ENCODE measurements at regions of chr1 and their contacts with region 1.

Region 1: GRCh38 chr1:48572646-48573261 is 100.8 kb upstream of the SPATA6 start:
- DNase-seq: no peak
- H3K4me3 ChIP-seq: no peak overlapping the region
- H3K27me3 ChIP-seq: no peaks in the 10 kb centered on the region
- CTCF ChIP-seq: peak; percentile 59

Region 2: DNA sequence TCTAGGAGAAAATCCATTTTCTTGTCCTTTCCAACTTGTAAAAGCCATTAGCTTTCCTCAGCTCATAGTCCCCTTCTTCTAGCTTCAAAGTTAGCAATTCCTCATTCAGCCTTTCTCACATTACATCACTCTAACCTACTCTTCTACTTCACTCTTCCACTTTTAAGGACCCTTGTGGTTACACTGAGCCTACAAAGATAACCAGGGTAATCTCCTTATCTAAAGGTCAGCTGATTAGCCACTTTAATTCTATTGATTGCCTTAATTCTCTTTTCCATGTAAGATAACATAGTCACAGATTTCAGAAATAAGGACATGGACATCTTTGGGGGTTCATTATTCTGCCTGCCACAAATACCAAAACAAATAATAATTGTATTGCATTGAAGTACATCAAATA is 92.2 kb before region 1 on chr1:
- CTCF ChIA-PET with region 1: no interaction called
- POLR2A ChIA-PET with region 1: no interaction called
- DNase-seq: no peak
- H3K4me3 ChIP-seq: no peak overlapping the region
- H3K27me3 ChIP-seq: no peaks in the 10 kb centered on the region
- CTCF ChIP-seq: no peak

Region 3: GRCh38 chr1:48697066-48697707 is 124.4 kb after region 1 on chr1:
- CTCF ChIA-PET with region 1: interaction called, 21 read pairs
- POLR2A ChIA-PET with region 1: no interaction called
- DNase-seq: no peak
- H3K4me3 ChIP-seq: no peak overlapping the region
- H3K27me3 ChIP-seq: no peaks in the 10 kb centered on the region
- CTCF ChIP-seq: peak; percentile 89

Region 4: GRCh38 chr1:48817505-48818114 is 244.9 kb after region 1 on chr1:
- CTCF ChIA-PET with region 1: interaction called, 14 read pairs
- POLR2A ChIA-PET with region 1: no interaction called
- DNase-seq: no peak
- H3K4me3 ChIP-seq: no peak overlapping the region
- H3K27me3 ChIP-seq: no peaks in the 10 kb centered on the region
- CTCF ChIP-seq: peak; percentile 77